Breast epithelium (tissue), 4 donors: ENCODE measurements at regions of chr2 and their contacts with region 1.

Region 1: GRCh38 chr2:178943745-178944144 is 106.2 kb downstream of the CCDC141 start:
- DNase-seq: no peak
- H3K4me3 ChIP-seq: no peak overlapping the region
- H3K27ac ChIP-seq: no peak overlapping the region
- H3K4me1 ChIP-seq: no peaks in the 10 kb centered on the region
- H3K27me3 ChIP-seq: no peaks in the 10 kb centered on the region
- CTCF ChIP-seq: no peak
- POLR2A ChIP-seq: no peak

Region 2: GRCh38 chr2:177830881-177831386 is 1112.8 kb before region 1 on chr2:
- intact Hi-C with region 1: loop called (anchors 5 kb)
- DNase-seq: no peak
- H3K4me3 ChIP-seq: no peak overlapping the region
- H3K27ac ChIP-seq: no peak overlapping the region
- H3K4me1 ChIP-seq: no peaks in the 10 kb centered on the region
- H3K27me3 ChIP-seq: no peaks in the 10 kb centered on the region
- CTCF ChIP-seq: no peak
- POLR2A ChIP-seq: no peak